GM18951 (cell line): ENCODE measurements at regions of chr7 and their contacts with region 1.

Region 1: DNA sequence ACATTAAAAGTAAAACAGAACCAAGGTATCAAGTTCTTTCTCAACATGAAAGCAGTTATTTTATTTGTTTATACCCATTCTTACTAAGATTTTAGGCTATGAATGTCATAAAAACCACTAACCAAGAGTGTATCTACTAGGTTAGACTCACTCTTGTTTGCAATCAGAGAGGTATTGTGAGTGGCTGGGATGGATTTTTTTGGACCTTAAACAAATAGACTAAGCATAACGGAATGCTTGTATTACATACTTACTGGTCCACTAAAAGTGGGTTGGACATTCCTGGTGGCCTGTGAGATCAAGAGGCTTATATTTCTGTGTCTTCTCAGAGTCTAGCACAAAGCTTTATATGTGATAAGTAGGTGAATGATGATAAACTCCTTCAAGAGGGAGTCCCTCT is 32.6 kb upstream of the CBLL1 start:
- POLR2A ChIP-seq: no peak

Region 2: GRCh38 chr7:107180378-107180777 is 530.9 kb before region 1 on chr7:
- in situ Hi-C with region 1: no loop called
- POLR2A ChIP-seq: no peak

Region 3: DNA sequence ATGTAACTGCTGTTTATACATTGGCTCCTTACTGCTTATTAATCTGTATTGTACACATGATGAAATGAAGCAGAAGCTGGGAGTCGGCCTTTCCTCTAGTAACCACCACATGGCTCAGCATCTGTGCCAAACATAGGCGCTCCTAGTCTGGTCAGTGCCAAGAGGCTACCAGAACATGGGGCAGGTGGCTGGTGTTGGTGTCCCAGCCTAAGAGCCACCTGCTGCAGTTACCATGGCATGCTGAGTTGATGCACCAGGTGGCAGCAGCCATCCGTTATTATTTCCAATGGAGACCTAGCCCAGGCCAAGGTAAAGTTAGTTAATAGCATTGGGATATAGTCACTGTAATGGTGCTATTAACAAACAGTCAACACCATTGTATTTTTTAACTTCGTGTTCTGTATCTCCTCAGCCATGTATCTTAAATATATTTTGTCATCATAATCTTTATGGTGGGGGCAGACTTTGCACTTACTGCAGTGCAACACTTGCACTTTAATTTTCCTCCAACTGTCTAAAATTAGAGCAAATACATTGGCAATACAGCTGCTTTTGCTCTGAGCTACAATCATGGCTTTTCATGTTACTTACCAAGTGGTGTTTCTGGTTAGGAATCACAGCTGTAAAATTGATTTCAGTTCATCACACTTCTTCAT is 509.4 kb before region 1 on chr7:
- in situ Hi-C with region 1: loop called (anchors 25 kb)
- POLR2A ChIP-seq: no peak